Ascending aorta (tissue), 2 donors: ENCODE measurements at regions of chr5 and their contacts with region 1.

Region 1: DNA sequence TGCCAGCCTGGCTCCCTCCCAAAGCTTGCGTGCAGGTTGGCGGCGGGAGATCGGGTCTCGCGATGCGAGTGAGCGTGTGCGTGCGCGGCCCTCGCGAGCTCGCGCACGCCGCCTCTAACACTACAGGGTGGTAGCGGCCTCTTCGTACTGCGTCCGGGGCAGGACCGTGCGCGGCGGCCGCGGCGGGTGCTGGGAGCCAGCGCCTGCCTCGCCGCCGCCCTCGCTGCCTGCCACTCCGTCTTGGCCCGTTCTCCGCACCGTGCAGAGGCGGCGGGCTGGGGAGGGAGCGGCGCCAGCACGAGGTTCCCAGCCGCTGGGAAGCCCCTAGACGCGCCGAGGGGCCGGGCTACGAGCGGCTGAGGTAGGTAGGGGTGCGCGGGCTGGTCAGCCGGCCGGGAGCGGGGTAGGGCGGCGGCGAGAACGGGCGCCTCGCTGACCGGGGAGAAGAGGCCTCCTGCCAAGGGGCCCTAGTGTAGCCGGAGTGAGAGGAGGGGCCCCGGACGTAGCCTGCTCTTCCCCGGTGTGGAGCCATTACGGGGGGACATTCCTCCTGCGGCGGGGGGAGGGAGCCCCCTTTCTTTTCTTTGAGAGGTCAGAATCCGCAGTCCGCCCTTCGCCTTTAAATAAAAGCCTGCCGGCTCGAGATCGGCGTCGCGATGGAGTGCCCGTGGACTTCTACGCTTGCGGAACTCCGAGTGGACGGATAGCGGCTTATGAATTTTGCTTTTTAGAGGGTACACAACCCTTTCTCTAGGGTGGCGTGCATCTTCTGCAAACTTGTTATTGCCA is at the start of gene C5orf24:
- DNase-seq: peak; percentile 85 to 97
- H3K4me3 ChIP-seq: peak within 1 kb of the TSS; percentile 92 to 94
- H3K27ac ChIP-seq: peak within 1 kb of the TSS; percentile 95 to 97
- H3K4me1 ChIP-seq: peaks cover 4 to 30% of the 10 kb centered on the region in 2 donors
- H3K27me3 ChIP-seq: no peaks in the 10 kb centered on the region
- CTCF ChIP-seq: no peak
- total RNA-seq, gene C5orf24: 36.5 TPM

Region 2: DNA sequence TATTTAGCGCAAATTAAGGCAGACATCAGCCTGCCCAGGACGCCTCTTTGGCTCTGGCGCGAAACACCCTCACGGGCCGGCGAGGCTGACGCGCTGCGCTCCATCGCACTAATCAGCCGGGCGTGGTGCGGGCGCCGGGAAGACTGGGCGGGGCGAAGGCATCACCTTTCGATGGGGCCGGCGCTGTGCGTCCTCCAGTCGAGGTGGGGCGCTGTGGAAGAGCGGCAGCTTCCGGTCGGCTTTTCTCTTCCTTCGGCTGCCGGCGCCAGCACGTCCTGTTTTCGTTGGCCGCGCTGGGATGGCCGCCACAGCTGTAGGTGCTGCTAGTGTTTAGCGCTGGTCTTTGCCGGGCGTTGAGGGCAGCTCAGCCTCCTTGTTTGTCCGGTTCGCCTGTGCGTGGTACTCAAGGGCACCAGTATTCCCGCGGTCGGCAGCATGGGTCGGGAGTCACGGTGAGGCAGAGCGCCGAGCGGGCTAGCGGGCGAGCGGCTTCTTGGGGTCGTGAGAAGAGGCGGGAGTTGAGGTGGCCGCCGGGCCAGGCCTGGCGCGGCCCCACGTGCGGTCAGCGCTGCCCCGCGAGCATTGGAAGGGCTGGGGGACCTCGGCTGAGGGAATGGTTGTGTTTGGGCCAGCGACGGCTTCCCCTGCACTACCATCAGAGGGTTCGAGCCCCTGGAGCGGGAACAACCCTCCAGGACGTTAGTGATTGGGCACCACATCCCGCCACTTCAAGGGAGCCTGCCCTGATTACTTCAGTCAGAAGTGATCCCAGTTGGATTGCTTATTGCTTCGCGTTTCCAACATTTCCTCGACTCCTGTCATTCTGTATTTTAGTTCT is 87.3 kb before region 1 on chr5 and contains the start of gene DDX46:
- intact Hi-C with region 1: loop called (anchors 5 kb)
- DNase-seq: peak; percentile 58 to 95
- H3K4me3 ChIP-seq: peak within 1 kb of the TSS; percentile 91 to 97
- H3K27ac ChIP-seq: peak within 1 kb of the TSS; percentile 74 to 82
- H3K4me1 ChIP-seq: peaks cover 3 to 7% of the 10 kb centered on the region in 2 donors
- H3K27me3 ChIP-seq: no peaks in the 10 kb centered on the region
- CTCF ChIP-seq: peak; percentile 59 to 88 (median 85)
- total RNA-seq, gene DDX46: 84.1 TPM

Region 3: GRCh38 chr5:134873987-134874830 is 28.2 kb after region 1 on chr5 and contains the start of gene TXNDC15:
- intact Hi-C with region 1: loop called (anchors 2 kb)
- DNase-seq: peak; percentile 47 to 93
- H3K4me3 ChIP-seq: peak within 1 kb of the TSS; percentile 94 to 96
- H3K27ac ChIP-seq: peak within 1 kb of the TSS; percentile 96 to 97
- H3K4me1 ChIP-seq: peaks cover 0 to 9% of the 10 kb centered on the region in 2 donors
- H3K27me3 ChIP-seq: no peaks in the 10 kb centered on the region
- CTCF ChIP-seq: no peak
- total RNA-seq, gene TXNDC15: 211 TPM

Region 4: DNA sequence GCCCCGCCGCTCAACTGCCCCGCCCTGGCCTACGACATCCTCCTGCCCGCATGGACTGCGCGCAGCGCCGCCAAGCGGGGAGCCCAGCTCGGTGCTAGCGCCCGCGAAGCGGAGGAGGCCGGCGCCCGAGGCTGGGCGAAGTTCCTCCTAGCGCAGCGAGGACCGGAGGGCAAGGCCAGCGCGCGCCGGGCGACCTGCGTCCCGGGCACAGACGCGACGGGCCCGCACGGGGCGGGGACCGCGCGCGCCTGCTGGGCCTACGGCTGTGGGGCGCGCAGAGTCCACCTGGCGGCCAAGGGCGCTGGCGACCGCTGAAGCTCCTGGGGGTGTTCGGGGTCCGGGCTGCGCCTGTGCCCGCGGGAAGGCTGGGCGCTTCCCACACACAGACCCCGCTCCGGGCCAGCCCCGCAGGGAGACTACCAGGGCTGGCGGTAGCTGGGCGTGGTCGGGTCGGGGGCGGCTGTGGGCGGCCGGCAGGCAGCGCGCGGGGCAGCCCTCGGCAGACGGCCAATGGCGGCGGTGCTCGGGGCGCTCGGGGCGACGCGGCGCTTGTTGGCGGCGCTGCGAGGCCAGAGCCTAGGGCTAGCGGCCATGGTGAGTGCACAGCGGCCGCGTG is 58.7 kb after region 1 on chr5 and contains the start of gene PCBD2:
- intact Hi-C with region 1: loop called (anchors 1 kb)
- DNase-seq: peak; percentile 62 to 94
- H3K4me3 ChIP-seq: peak within 1 kb of the TSS; percentile 85 to 97
- H3K27ac ChIP-seq: peak within 1 kb of the TSS; percentile 96
- H3K4me1 ChIP-seq: no peaks in the 10 kb centered on the region
- H3K27me3 ChIP-seq: no peaks in the 10 kb centered on the region
- CTCF ChIP-seq: peak; percentile 84 to 97 (median 89)
- total RNA-seq, gene PCBD2: 7.6 TPM